MCF 10A (cell line): ENCODE measurements at regions of chr15 and their contacts with region 1.

Region 1: DNA sequence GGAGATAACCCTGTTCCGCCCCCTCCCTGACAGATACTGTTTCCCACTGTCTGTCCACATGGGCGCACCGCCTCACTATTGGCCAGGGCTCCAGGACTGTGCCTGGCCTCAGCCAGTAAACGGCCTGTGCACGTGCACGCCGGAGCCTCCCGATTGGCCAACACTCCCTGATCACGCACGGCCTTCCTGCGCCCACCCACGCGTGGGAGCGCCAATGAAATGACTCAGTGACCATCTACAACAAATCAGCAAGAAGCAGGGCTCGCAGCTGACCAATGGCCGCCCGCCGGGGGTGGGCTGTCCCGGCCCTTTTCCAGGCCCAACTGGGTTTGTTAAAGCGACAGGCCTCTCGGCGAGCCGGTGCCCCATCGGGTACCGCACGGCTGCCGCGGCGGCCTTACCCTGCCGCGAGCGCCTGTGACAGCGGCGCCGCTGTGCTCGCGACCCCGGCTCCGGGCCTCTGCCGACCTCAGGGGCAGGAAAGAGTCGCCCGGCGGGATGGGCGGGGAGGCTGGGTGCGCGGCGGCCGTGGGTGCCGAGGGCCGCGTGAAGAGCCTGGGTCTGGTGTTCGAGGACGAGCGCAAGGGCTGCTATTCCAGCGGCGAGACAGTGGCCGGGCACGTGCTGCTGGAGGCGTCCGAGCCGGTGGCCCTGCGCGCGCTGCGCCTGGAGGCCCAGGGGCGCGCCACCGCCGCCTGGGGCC is at the start of gene ARRDC4:
- DNase-seq: peak; percentile 99
- H3K4me3 Mint-ChIP-seq: peak within 1 kb of the TSS; percentile 83
- H3K27ac Mint-ChIP-seq: peak within 1 kb of the TSS; percentile 53
- H3K4me1 Mint-ChIP-seq: peaks cover 45% of the 10 kb centered on the region
- H3K27me3 Mint-ChIP-seq: no peaks in the 10 kb centered on the region
- CTCF ChIP-seq: no peak
- total RNA-seq, gene ARRDC4: 36.0 and 39.8 TPM in 2 replicates

Region 2: DNA sequence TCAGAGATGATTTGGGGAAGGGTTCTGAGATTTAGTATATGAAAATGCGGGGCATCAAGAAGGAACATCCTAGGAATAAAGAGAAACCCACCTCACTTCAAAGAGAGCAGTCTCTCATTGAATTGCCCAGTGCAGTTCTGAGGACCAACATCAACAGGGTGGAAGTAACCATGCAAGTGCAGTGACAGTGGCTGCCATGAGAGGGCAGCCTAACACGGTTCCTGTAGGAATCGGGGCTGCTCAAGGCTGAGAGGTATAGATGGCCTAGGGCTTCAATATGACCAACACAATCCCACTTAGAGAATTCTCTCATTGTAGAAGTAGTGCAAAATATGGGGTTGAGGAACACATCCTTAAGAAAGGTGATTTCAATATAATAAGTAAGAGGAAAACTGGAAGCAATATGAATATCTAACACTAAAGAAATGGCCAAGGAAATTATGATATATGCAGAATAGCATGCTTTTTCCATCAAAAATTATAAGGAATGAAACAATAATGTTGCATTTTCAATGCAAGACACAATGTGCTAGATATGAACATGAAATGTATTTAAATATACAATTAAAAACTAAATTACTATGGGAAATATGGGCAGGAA is 51.1 kb before region 1 on chr15:
- CTCF ChIA-PET with region 1: interaction called, 5 read pairs
- POLR2A ChIA-PET with region 1: no interaction called
- intact Hi-C with region 1: loop called (anchors 5 kb)
- DNase-seq: peak; percentile 66
- H3K4me3 Mint-ChIP-seq: no peak overlapping the region
- H3K27ac Mint-ChIP-seq: no peak overlapping the region
- H3K4me1 Mint-ChIP-seq: peaks cover 8% of the 10 kb centered on the region
- H3K27me3 Mint-ChIP-seq: no peaks in the 10 kb centered on the region
- CTCF ChIP-seq: peak; percentile 93

Region 3: DNA sequence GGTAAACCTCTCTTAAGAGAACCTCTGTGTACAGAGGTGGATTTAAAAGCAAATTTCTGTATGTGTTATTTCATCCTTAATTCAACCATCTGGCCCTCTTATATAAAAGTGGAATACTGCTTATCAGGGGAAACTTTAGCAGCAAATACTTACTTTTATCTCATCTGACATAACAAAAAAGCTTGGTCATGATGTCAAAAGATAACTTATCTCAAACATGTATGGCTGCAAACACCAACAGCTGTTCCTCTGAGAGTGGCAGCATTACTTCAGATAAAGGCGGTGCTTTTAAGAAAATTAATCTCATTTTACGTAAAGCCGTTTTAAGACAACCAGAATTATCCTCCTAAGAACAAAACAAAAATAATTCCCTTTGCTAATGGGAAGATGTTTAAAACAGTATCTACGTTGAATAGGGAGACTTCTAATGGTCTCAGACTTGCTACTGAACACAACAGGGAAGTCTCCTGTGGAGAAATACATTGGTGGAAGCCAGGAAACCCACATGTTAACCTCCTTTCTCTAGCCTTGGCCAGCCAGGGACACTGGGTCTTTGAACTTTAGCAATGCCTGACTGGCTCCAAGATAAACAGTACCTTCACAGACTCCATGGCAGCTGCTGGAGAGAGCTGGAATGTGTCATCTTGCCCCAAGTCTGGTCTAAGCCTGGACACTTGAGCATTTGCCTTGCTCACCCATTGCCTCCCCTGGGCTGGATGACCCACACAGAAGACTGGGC is 18.1 kb after region 1 on chr15:
- CTCF ChIA-PET with region 1: interaction called, 3 read pairs
- POLR2A ChIA-PET with region 1: interaction called, 24 read pairs
- intact Hi-C with region 1: no loop called
- DNase-seq: peak; percentile 64
- H3K4me3 Mint-ChIP-seq: no peak overlapping the region
- H3K27ac Mint-ChIP-seq: peak overlapping the region; percentile 51
- H3K4me1 Mint-ChIP-seq: peaks cover 39% of the 10 kb centered on the region
- H3K27me3 Mint-ChIP-seq: no peaks in the 10 kb centered on the region
- CTCF ChIP-seq: no peak

Region 4: DNA sequence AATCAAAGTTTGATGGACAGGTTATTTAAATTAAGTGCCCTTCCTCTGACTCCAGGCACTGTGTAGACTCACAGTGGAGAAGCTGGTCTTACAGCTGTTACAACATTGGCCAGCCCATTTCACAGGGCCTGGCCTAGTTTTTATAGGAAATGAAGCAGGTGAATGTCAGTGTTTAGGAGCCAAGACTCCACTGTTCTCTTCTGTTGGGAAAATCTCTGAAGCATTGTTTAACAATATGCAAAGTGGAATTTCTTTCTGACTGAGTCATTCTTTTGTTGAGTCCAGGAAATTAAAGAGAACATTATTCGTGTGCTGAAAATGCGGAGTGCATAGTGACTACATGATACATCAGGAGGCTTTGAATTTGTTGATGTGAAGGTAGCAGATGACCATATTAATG is 64.7 kb after region 1 on chr15:
- CTCF ChIA-PET with region 1: no interaction called
- POLR2A ChIA-PET with region 1: no interaction called
- intact Hi-C with region 1: loop called (anchors 2 kb)
- DNase-seq: peak; percentile 56
- H3K4me3 Mint-ChIP-seq: no peak overlapping the region
- H3K27ac Mint-ChIP-seq: no peak overlapping the region
- H3K4me1 Mint-ChIP-seq: peaks cover 17% of the 10 kb centered on the region
- H3K27me3 Mint-ChIP-seq: no peaks in the 10 kb centered on the region
- CTCF ChIP-seq: no peak

Region 5: GRCh38 chr15:98035577-98036010 is 75.1 kb after region 1 on chr15:
- CTCF ChIA-PET with region 1: no interaction called
- POLR2A ChIA-PET with region 1: interaction called, 15 read pairs
- intact Hi-C with region 1: no loop called
- DNase-seq: peak; percentile 50
- H3K4me3 Mint-ChIP-seq: peak overlapping the region; percentile 38
- H3K27ac Mint-ChIP-seq: peak overlapping the region; percentile 83
- H3K4me1 Mint-ChIP-seq: peaks cover 13% of the 10 kb centered on the region
- H3K27me3 Mint-ChIP-seq: no peaks in the 10 kb centered on the region
- CTCF ChIP-seq: no peak

Region 6: DNA sequence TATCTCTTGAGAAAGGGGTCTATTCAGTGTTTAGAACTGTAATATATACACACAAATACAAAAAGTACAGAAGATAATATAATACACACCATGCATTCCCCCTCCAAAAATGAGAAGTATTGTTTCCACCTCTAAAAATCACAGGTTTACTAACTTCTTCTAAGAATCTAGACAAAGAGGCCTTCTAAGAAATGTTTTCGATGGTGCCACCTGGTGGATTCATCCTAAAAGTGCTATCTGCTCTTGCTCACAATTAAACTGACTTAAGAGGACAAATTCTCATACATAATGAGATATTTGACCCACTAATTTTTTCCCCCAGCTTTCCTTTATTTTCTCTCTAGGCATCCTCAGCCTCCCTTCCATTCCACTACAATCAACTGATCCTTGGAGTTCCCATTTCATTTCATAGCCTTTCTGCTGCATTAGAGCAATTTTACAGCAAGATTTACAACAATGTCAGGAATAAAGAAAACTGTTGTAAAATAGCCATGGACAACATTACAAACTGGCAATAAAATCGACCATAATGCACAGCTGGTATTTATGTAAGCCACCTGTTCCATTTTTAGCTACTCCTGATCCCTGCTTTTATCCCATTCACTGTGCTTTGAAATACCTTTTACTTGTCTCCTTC is 124.6 kb after region 1 on chr15:
- CTCF ChIA-PET with region 1: interaction called, 11 read pairs
- POLR2A ChIA-PET with region 1: interaction called, 5 read pairs
- intact Hi-C with region 1: loop called (anchors 2 kb)
- DNase-seq: peak; percentile 74
- H3K4me3 Mint-ChIP-seq: no peak overlapping the region
- H3K27ac Mint-ChIP-seq: no peak overlapping the region
- H3K4me1 Mint-ChIP-seq: no peaks in the 10 kb centered on the region
- H3K27me3 Mint-ChIP-seq: no peaks in the 10 kb centered on the region
- CTCF ChIP-seq: peak; percentile 53

Region 7: DNA sequence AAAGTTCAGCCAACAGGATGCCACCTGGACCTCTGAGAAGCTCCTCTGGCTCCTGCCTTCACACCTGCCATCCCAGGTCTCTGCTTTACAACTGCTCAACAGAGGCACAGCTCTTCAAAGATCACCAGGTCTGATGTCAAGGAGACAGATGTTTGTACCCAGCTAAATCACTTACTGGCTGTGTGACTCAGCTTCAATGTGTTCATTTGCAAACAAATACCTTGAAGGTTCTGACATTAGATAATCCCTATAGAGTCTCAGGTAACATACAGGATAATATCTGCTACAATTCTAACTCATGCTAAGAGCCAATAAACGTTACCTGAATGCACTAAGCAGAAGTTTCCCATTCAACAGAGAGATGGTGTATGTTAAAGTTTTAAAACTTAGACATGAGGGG is 524.4 kb after region 1 on chr15:
- CTCF ChIA-PET with region 1: no interaction called
- POLR2A ChIA-PET with region 1: no interaction called
- intact Hi-C with region 1: no loop called
- DNase-seq: no peak
- H3K4me3 Mint-ChIP-seq: no peak overlapping the region
- H3K27ac Mint-ChIP-seq: no peak overlapping the region
- H3K4me1 Mint-ChIP-seq: no peaks in the 10 kb centered on the region
- H3K27me3 Mint-ChIP-seq: no peaks in the 10 kb centered on the region
- CTCF ChIP-seq: no peak